ENCODE measurements at regions of chr12 and their contacts with region 1.

Region 1: DNA sequence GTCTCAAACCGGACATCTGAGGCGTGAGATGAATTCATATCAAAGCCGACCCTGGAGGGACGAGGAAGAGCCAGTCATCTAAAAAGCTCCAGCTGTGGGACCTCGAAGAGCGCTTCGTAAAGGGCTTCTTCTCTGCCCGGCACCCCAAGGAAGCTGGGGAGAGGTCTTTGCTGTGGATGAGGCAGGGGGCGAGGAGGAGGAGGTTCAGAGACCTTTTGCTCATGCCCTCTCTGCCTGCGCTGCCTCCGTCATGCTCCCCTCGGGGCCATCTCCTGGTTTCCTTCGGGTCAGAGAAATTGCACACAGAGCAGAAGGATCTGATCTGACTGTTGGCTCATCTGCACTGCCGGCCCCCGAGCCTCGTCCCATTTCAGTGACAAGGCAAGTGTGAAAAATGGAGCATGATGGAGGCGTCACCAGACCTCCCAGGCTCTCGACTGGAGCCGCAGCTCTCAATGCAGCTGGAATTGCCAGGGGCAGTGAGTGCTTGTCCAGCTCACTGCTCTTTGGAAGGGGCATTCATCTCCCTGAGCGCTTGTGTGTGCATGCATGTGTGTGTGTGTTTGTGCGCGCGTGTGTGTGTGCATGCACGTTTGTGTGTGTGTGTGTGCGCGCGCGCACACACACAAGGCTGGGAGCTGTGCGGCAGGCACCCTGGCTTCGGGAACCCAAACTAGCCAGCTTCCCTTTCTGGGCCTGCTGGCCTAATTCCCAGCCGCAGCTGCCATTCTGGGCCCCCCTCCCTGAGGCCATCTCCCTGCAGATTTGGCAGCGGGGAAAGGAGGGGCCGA is 9.2 kb downstream of the CABP1 start:
- DNase-seq: no peak
- H3K4me3 ChIP-seq: peak overlapping the region; percentile 19 to 45 (median 42)
- H3K27ac ChIP-seq: peak overlapping the region; percentile 68 to 81 (median 77)
- H3K4me1 ChIP-seq: peaks cover 0 to 54% (median 40%) of the 10 kb centered on the region in 4 donors
- H3K27me3 ChIP-seq: peaks cover 0 to 13% (median 10%) of the 10 kb centered on the region in 3 donors
- CTCF ChIP-seq: peak in 2 of 4 experiments; percentile 4 to 48
- EP300 ChIP-seq: no peak
- POLR2A ChIP-seq: no peak

Region 2: GRCh38 chr12:120432772-120433525 is 216.7 kb before region 1 on chr12:
- intact Hi-C with region 1: no loop called
- DNase-seq: no peak
- H3K4me3 ChIP-seq: no peak overlapping the region
- H3K27ac ChIP-seq: no peak overlapping the region
- H3K4me1 ChIP-seq: peaks cover 0 to 9% (median 2%) of the 10 kb centered on the region in 4 donors
- H3K27me3 ChIP-seq: peaks cover 0 to 4% (median 0%) of the 10 kb centered on the region in 3 donors
- CTCF ChIP-seq: no peak
- EP300 ChIP-seq: no peak
- POLR2A ChIP-seq: no peak

Region 3: GRCh38 chr12:120538281-120539156 is 111.1 kb before region 1 on chr12:
- intact Hi-C with region 1: no loop called
- DNase-seq: peak; percentile 84
- H3K4me3 ChIP-seq: peak overlapping the region in 3 of 4 donors; percentile 13 to 98 (median 92)
- H3K27ac ChIP-seq: peak overlapping the region; percentile 93 to 99 (median 96)
- H3K4me1 ChIP-seq: peaks cover 0 to 86% (median 82%) of the 10 kb centered on the region in 4 donors
- H3K27me3 ChIP-seq: no peaks in the 10 kb centered on the region
- CTCF ChIP-seq: no peak
- EP300 ChIP-seq: peak in 1 of 4 donors; percentile 34
- POLR2A ChIP-seq: no peak

Region 4: DNA sequence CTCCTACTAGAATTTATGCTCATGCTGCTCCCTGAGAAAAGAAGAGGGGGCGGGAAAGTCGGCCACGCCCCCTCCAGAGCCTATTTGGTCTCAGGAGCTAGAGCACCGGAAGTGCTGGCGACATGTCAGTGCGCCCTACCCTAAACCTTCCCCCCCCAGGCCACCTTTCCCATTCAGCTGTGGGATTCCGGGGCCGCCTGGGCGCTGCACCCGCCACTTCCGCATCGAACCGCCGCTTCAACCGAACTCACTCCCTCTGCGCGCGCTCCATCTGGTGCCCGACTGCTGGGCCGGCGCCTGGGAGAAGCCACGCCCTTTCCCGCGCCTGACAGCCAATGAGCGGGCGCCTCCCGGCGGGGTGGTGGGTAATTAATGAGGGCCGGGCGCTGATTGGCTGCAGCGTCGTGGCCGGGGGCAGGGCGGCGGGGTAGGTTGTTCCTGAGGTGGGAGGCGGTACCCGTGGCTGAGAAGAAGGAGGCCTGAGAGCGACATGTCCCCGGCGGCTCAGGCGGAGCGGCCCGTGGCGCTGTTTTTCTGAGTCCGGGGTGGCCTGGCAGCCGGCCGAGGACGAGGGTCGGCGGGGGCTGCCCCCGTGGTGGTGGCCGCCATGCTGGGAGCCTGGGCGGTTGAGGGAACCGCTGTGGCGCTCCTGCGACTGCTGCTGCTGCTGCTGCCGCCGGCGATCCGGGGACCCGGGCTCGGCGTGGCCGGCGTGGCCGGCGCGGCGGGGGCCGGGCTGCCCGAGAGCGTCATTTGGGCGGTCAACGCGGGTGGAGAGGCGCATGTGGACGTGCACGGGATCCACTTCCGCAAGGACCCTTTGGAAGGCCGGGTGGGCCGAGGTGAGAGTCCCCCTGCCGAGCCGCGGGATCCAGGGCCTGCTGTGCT is 37.3 kb after region 1 on chr12 and contains the start of gene MLEC:
- intact Hi-C with region 1: loop called (anchors 2 kb)
- DNase-seq: peak; percentile 99
- H3K4me3 ChIP-seq: peak within 1 kb of the TSS; percentile 77 to 100 (median 89)
- H3K27ac ChIP-seq: peak within 1 kb of the TSS; percentile 92 to 97 (median 94)
- H3K4me1 ChIP-seq: peaks cover 0 to 52% (median 40%) of the 10 kb centered on the region in 4 donors
- H3K27me3 ChIP-seq: no peaks in the 10 kb centered on the region
- CTCF ChIP-seq: no peak
- EP300 ChIP-seq: no peak
- POLR2A ChIP-seq: peak; percentile 58 to 81
- total RNA-seq, gene MLEC: 30.3 to 40.3 (median 33.6) TPM

Region 5: DNA sequence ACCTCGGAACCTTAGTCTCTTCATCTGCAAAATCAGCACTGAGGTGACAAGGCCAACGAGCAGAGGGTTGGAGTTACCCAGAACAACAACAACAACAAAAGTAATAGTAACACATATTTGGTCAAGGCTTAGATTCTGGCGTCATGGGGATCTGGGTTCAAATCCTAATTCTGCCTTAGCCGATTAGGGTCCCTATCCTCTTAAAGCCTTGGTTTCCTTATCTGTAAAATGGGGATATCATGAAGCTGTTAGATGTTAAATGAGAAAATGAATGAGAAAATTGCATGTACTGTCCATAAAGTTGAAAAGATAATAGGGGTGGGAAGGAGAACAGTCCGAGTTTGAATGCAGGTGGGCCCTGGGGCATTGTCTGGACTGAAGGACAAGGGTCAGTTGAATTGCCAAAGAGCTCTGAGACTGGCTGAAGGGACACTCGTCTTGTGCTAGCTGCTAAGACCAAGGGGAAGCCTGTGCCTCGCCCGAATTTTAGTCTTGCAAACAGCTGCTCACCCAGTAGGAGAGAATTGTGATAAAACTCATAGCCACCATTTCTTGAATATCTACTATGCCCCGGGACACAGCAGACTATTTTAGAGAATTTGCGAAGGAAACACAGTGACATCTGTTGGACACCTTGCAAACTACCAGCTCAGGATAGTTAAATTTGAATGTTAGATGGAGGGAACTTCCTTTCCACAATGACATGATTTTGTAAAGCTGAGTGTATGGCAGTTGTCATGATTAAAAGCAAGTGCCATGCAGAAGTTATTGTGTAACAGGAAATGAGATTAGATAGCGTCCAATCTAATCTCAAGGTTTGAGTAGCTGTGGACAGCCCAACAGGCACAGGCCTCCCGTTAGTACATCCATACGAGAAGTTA is 321.9 kb after region 1 on chr12:
- intact Hi-C with region 1: loop called (anchors 2 kb)
- DNase-seq: no peak
- H3K4me3 ChIP-seq: no peak overlapping the region
- H3K27ac ChIP-seq: no peak overlapping the region
- H3K4me1 ChIP-seq: no peaks in the 10 kb centered on the region
- H3K27me3 ChIP-seq: no peaks in the 10 kb centered on the region
- CTCF ChIP-seq: peak; percentile 36 to 72 (median 64)
- EP300 ChIP-seq: no peak
- POLR2A ChIP-seq: no peak

Measured in sigmoid colon (tissue), 7 donors.